Activated CD4-positive, alpha-beta memory T cell treated with anti-CD3 and anti-CD28 coated beads for 36 hours (primary cell): ENCODE measurements at regions of chr4 and their contacts with region 1.

Region 1: GRCh38 chr4:47383829-47384427 is 79.6 kb downstream of the COMMD8 start:
- DNase-seq: no peak
- H3K4me3 Mint-ChIP-seq: no peak overlapping the region
- H3K27ac Mint-ChIP-seq: no peak overlapping the region
- H3K4me1 Mint-ChIP-seq: no peaks in the 10 kb centered on the region
- H3K27me3 Mint-ChIP-seq: peaks cover 4% of the 10 kb centered on the region

Region 2: DNA sequence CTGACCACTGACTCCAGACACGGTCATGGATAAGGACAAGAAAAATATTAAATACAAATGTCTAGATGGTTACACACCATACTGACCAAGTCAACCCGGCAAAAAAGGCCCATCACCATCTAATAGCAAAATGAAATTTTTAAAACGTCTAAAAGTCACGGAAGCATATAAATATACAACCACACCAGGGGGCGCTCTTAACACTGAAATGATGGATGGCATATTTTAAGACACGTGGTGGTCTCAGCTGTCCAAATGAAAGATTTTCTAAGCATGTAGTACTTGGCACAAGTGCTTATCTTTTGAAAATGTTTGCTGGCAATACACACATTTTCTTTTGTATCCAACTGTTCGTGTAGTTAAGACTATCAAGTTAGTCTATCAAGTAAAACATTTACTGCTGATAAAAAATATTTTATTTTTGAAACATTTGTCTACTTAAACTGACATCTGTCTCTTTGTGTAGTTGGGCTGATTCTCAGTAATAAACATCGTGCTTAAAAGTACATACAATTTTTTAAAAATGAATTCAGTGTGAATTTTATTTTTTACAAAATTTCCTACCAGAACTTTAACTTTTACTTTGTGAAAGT is 539.5 kb before region 1 on chr4:
- CTCF ChIA-PET with region 1: interaction called, 6 read pairs
- POLR2A ChIA-PET with region 1: no interaction called
- intact Hi-C with region 1: loop called (anchors 1 kb)
- DNase-seq: peak; percentile 37
- H3K4me3 Mint-ChIP-seq: no peak overlapping the region
- H3K27ac Mint-ChIP-seq: no peak overlapping the region
- H3K4me1 Mint-ChIP-seq: no peaks in the 10 kb centered on the region
- H3K27me3 Mint-ChIP-seq: no peaks in the 10 kb centered on the region

Region 3: GRCh38 chr4:46931981-46932380 is 451.9 kb before region 1 on chr4:
- CTCF ChIA-PET with region 1: no interaction called
- POLR2A ChIA-PET with region 1: no interaction called
- intact Hi-C with region 1: loop called (anchors 5 kb)
- DNase-seq: peak; percentile 25
- H3K4me3 Mint-ChIP-seq: no peak overlapping the region
- H3K27ac Mint-ChIP-seq: no peak overlapping the region
- H3K4me1 Mint-ChIP-seq: no peaks in the 10 kb centered on the region
- H3K27me3 Mint-ChIP-seq: peaks cover 3% of the 10 kb centered on the region

Region 4: GRCh38 chr4:47032415-47033106 is 351.4 kb before region 1 on chr4:
- CTCF ChIA-PET with region 1: no interaction called
- POLR2A ChIA-PET with region 1: no interaction called
- intact Hi-C with region 1: loop called (anchors 5 kb)
- DNase-seq: peak; percentile 63
- H3K4me3 Mint-ChIP-seq: peak overlapping the region; percentile 23
- H3K27ac Mint-ChIP-seq: no peak overlapping the region
- H3K4me1 Mint-ChIP-seq: peaks cover 15% of the 10 kb centered on the region
- H3K27me3 Mint-ChIP-seq: peaks cover 29% of the 10 kb centered on the region